PC-3 (cell line): ENCODE measurements at regions of chr2 and their contacts with region 1.

Region 1: GRCh38 chr2:113965644-113966043 is 75.8 kb downstream of the ACTR3 start:
- DNase-seq: peak; percentile 54
- ATAC-seq: peak; percentile 44
- H3K4me3 ChIP-seq: no peak overlapping the region
- H3K27ac ChIP-seq: no peak overlapping the region
- H3K4me1 ChIP-seq: peaks cover 19% of the 10 kb centered on the region
- H3K27me3 ChIP-seq: no peaks in the 10 kb centered on the region
- CTCF ChIP-seq: peak; percentile 74

Region 2: DNA sequence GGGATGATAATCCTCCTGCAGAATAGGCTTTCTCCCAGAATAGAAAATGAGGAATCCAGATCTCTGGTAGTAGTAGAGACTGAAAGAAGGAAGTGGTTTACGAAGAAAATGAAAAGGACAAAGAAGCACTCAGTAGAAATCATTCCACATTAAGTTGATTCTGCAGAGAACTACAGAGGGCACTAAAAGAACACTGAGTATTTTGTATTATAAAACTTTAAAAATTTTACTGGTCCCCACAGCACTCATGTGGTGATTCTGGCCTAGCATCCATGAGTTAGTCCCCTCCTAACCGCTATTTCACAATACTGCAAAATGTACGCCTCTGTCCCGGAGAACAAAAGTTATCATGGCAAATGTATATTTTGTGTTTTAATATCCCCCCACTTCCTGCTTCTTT is 166.3 kb before region 1 on chr2:
- CTCF ChIA-PET with region 1: no interaction called
- POLR2A ChIA-PET with region 1: no interaction called
- intact Hi-C with region 1: loop called (anchors 5 kb)
- DNase-seq: no peak
- ATAC-seq: peak; percentile 22; the same call in 1 of the 2 replicates
- H3K4me3 ChIP-seq: no peak overlapping the region
- H3K27ac ChIP-seq: no peak overlapping the region
- H3K4me1 ChIP-seq: no peaks in the 10 kb centered on the region; the same call in 1 of the 2 replicates
- H3K27me3 ChIP-seq: no peaks in the 10 kb centered on the region
- CTCF ChIP-seq: 0 out of 2 replicates have a peak, but pooled peaks have one; percentile 19